Sigmoid colon (tissue), 7 donors: ENCODE measurements at regions of chrX and their contacts with region 1.

Region 1: GRCh38 chrX:71365876-71366673 is at the start of gene TAF1:
- DNase-seq: peak; percentile 98
- H3K4me3 ChIP-seq: peak within 1 kb of the TSS; percentile 48 to 71 (median 68)
- H3K27ac ChIP-seq: peak within 1 kb of the TSS; percentile 87 to 94 (median 90)
- H3K4me1 ChIP-seq: peaks cover 0 to 13% (median 11%) of the 10 kb centered on the region in 4 donors
- H3K27me3 ChIP-seq: no peaks in the 10 kb centered on the region
- CTCF ChIP-seq: no peak
- EP300 ChIP-seq: no peak
- POLR2A ChIP-seq: peak in 1 of 2 donors; percentile 12
- total RNA-seq, gene TAF1: 40.7 to 47.4 (median 43.6) TPM

Region 2: DNA sequence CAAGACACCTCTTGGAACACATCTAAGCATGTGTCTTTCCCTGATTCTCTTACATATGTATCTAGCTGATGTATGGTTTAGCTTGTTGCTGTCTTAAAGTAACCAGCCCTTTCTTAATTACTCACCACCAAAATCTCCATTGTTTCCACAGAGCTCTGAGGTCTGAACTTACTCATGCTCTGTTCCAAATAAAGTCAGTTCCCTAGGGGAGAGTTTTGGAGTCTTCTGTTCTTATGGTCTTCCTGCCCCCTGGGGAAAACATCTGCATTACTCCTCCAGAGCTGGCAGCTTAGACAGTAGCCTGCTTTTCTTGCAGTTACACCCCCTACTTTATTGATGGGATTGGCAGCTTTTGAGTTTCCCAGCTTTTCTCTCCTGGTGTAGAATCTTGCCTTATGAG is 1624.4 kb before region 1 on chrX:
- intact Hi-C with region 1: no loop called
- DNase-seq: no peak
- H3K4me3 ChIP-seq: no peak overlapping the region
- H3K27ac ChIP-seq: no peak overlapping the region
- H3K4me1 ChIP-seq: no peaks in the 10 kb centered on the region
- H3K27me3 ChIP-seq: no peaks in the 10 kb centered on the region
- CTCF ChIP-seq: no peak
- EP300 ChIP-seq: no peak
- POLR2A ChIP-seq: no peak

Region 3: GRCh38 chrX:71254092-71254941 is 111.8 kb before region 1 on chrX and contains the start of gene ZMYM3:
- intact Hi-C with region 1: loop called (anchors 2 kb)
- DNase-seq: peak; percentile 93
- H3K4me3 ChIP-seq: peak within 1 kb of the TSS; percentile 53 to 70 (median 66)
- H3K27ac ChIP-seq: peak within 1 kb of the TSS; percentile 85 to 93 (median 89)
- H3K4me1 ChIP-seq: peaks cover 0 to 16% (median 12%) of the 10 kb centered on the region in 4 donors
- H3K27me3 ChIP-seq: no peaks in the 10 kb centered on the region
- CTCF ChIP-seq: no peak
- EP300 ChIP-seq: no peak
- POLR2A ChIP-seq: peak in 1 of 2 donors; percentile 32
- total RNA-seq, gene ZMYM3: 12.4 to 23.5 (median 14.6) TPM

Region 4: DNA sequence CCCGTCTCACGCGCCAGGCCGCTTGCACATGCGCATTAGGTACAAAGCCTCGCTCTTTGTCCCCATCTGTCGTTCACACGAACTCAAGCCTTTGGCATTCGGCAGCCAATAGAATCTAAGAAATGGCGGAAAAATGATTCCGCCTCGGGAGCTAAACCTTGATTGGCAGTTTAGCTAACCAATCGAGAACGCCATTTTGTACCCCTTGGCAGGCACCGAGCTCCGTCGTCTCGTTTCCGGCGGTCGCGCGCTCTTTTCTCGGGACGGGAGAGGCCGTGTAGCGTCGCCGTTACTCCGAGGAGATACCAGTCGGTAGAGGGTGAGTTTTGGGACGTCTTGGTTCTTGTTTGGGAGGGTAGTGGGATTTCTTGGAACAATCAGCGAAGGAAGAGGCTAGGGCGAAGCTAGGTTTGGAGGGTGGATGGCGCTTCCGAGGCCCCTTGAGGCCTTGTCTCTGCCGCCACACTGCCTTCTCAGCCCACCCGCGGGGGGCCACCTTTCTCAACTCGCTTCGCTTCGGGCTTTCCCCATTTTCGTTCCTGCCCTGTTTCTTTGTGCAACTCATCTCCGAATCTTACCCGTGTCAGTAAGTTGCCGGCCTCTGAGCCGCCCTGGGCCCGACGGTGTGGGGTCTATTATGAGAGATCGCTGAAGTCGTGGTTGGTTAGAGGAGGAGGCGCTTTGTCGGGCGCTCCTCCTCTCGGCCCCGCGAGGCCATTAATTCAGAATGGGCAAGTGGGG is 82.5 kb before region 1 on chrX and contains the start of gene NONO:
- intact Hi-C with region 1: loop called (anchors 2 kb)
- DNase-seq: peak; percentile 94
- H3K4me3 ChIP-seq: peak within 1 kb of the TSS; percentile 50 to 63 (median 62)
- H3K27ac ChIP-seq: peak within 1 kb of the TSS; percentile 85 to 95 (median 89)
- H3K4me1 ChIP-seq: peaks cover 0 to 29% (median 11%) of the 10 kb centered on the region in 4 donors
- H3K27me3 ChIP-seq: no peaks in the 10 kb centered on the region
- CTCF ChIP-seq: peak in 1 of 4 experiments; percentile 19
- EP300 ChIP-seq: no peak
- POLR2A ChIP-seq: peak; percentile 78 to 80
- total RNA-seq, gene NONO: 170 to 214 (median 194) TPM

Region 5: DNA sequence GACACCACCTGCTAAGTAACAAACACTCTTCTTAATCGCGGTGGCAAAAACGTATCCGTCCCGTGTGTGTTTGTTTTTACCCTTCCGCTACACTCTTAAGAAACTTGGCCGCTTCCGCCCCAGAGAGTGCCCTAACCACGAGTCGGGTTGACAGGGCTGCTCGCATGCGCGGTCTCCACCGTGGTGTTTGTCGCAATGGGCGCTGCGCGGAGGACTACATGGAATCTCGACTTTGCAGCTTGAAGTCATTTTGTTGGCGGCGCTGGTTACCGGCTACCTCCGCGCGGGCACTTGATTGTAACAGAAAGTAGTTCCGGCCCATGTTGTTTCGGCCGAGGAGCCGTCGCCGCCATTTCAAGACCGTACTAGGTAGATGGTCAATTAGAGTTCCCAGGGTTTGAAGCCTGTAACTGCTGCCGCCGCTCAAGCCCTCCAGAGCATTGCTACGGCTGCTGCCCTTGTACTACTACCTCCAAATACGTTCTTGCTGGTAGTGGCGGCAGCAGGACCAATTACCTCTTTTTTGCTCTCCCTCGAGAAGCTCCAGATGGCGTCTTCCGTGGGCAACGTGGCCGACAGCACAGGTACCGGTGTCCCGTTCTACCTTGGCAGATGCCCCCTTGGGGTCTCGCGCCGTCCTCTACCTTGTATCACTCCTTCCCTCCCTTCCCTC is 166.8 kb after region 1 on chrX and contains the start of gene OGT:
- intact Hi-C with region 1: loop called (anchors 10 kb)
- DNase-seq: peak; percentile 98
- H3K4me3 ChIP-seq: peak within 1 kb of the TSS; percentile 61 to 73 (median 66)
- H3K27ac ChIP-seq: peak within 1 kb of the TSS; percentile 85 to 91 (median 88)
- H3K4me1 ChIP-seq: peaks cover 0 to 9% (median 4%) of the 10 kb centered on the region in 4 donors
- H3K27me3 ChIP-seq: no peaks in the 10 kb centered on the region
- CTCF ChIP-seq: no peak
- EP300 ChIP-seq: no peak
- POLR2A ChIP-seq: peak; percentile 29 to 32
- total RNA-seq, gene OGT: 104 to 201 (median 122) TPM